Left cardiac atrium (tissue), 4 donors: ENCODE measurements at regions of chr11 and their contacts with region 1.

Region 1: GRCh38 chr11:59615637-59616395 is at the start of gene OSBP:
- DNase-seq: peak; percentile 99
- ATAC-seq: peak; percentile 91 to 95
- total RNA-seq, gene OSBP: 31.7 to 37.8 TPM

Region 2: DNA sequence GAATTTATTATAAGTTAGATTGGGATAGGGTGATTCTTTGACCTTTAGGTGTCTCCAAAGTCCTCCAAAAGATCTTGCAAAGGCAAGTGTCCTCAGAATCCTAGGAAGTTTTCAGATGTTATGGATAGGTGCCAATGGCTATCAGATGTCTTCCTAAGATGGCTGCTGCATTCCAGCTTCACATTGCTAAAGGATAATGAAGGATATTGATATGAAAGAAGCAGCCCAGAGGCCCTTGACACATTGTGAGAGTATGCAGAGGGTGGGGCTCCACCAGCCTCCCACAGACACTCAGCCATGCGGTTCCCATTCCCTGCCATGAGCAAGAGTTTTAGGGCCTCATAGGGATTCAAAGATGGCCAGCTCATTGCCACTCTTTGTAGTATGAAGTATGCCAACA is 749.0 kb before region 1 on chr11:
- intact Hi-C with region 1: no loop called
- DNase-seq: no peak
- ATAC-seq: no peak

Region 3: GRCh38 chr11:59560702-59561469 is 54.9 kb before region 1 on chr11:
- intact Hi-C with region 1: loop called in 1 of 2 experiments (anchors 5 kb)
- DNase-seq: peak; percentile 90
- ATAC-seq: peak; percentile 86 to 88

Region 4: GRCh38 chr11:59668950-59669610 is 53.3 kb after region 1 on chr11 and contains the start of gene PATL1:
- intact Hi-C with region 1: loop called in 1 of 2 experiments (anchors 10 kb)
- DNase-seq: peak; percentile 100
- ATAC-seq: peak; percentile 97
- total RNA-seq, gene PATL1: 21.6 to 28.2 TPM

Region 5: DNA sequence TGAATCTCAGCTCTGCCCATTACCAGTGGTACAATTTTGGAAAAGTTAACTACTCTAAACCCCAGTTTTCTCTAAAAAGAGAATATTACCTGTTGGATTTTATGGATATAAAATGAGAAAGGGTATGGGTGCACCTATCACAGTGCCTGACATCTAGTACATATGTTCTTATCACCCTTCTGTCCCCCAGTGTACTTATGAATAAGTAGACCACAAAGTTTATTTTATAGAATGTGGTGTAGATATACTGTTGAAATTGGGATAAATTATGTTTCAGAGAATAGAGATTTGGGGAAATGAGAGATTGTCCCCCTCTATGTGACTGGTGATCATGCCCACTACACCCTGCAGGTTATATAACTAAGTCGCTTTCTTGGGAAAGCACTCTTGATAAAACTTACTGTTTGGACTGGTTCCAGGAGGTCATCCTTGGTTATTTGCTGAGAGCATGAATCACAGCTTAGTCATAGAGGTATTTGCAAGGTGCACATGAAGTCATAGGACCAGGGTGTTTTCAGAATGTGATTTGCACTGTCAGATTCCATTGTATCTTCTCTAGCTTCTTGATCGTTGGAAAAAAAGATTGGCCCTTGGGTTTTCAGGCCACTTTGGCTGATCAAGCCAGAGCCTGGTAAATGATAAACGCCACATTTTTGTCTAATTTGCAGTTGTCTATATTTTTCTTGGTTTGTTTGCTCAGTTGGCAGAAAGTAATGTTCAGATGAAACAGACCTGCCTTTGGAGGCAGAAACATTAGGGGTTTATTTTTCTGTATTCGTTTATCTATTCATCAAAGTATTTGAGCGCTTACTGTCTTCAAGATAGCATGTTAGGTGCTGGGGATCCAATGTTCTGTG is 160.6 kb after region 1 on chr11:
- intact Hi-C with region 1: no loop called
- DNase-seq: no peak
- ATAC-seq: peak in 1 of 2 donors; percentile 75

Region 6: DNA sequence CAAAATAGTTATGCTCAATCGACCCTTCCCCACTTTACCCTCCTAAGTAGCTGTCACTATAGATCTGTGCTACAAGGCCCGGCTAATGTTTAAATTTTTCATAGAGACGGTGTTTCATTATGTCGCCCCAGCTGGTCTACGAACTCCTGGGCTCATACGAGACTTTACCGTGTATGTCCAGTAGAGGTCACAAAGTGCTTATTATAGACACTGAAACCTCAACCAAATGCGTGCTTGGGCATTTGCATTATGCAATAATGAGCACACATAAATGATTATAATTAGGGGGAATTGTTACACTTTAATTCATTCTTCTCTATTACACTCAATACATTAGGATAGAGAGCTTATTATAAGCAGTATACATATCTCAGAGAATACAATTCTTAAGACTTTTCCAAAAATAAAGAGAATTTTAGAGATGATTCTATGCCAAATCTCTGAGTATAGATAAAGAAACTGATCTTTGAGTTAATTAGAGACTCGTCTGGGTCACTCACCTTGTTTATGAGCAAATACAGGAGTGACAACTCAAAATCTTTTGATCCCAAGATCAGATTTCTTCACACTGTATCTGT is 207.3 kb after region 1 on chr11:
- intact Hi-C with region 1: no loop called
- DNase-seq: no peak
- ATAC-seq: peak; percentile 79 to 83